Adrenal gland (tissue), 19 donors: ENCODE measurements at regions of chr3 and their contacts with region 1.

Region 1: GRCh38 chr3:7285505-7285904 is 424.6 kb downstream of the GRM7 start:
- DNase-seq: peak in 5 of 7 donors; percentile 37 to 57 (median 53)
- H3K4me3 ChIP-seq: no peak overlapping the region
- H3K27ac ChIP-seq: no peak overlapping the region
- H3K4me1 ChIP-seq: no peaks in the 10 kb centered on the region
- H3K27me3 ChIP-seq: no peaks in the 10 kb centered on the region
- CTCF ChIP-seq: peak in 5 of 6 experiments; percentile 30 to 52 (median 45)
- POLR2A ChIP-seq: no peak

Region 2: GRCh38 chr3:6468589-6468988 is 816.9 kb before region 1 on chr3:
- intact Hi-C with region 1: no loop called
- DNase-seq: no peak
- H3K4me3 ChIP-seq: no peak overlapping the region
- H3K27ac ChIP-seq: no peak overlapping the region
- H3K4me1 ChIP-seq: no peaks in the 10 kb centered on the region
- H3K27me3 ChIP-seq: no peaks in the 10 kb centered on the region
- CTCF ChIP-seq: no peak
- POLR2A ChIP-seq: no peak

Region 3: DNA sequence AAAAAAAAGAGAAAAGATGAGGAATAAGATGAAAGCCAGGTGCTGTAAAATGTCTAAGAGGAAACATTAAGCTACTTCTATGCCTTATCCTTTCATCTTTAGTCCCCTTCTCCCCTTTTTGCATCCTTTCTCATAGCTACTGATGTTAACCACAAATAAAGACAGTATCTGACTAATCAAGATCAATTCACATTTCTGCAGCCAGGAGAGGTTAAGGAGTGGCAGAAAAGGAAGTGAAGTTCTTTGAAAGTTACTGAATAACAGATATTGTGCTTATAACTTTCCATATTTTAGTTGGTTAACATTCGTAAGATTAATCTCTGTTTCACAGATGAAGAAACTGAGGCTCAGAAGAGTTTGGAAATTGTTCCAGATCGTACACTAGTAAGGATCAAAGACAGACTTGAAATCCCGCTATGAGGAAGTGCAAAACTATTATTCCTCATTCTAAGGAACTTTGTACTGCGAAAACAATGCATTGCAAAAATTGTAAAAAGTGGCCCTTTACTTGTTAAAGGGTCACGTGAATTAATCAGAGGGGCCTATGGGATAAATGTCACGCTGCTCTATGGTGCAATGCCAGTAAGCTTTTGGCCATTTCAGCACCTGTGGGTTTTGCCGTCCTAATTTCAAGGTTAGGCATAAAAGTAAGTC is 542.3 kb before region 1 on chr3:
- intact Hi-C with region 1: no loop called
- DNase-seq: no peak
- H3K4me3 ChIP-seq: no peak overlapping the region
- H3K27ac ChIP-seq: no peak overlapping the region
- H3K4me1 ChIP-seq: no peaks in the 10 kb centered on the region
- H3K27me3 ChIP-seq: no peaks in the 10 kb centered on the region
- CTCF ChIP-seq: no peak
- POLR2A ChIP-seq: no peak

Region 4: DNA sequence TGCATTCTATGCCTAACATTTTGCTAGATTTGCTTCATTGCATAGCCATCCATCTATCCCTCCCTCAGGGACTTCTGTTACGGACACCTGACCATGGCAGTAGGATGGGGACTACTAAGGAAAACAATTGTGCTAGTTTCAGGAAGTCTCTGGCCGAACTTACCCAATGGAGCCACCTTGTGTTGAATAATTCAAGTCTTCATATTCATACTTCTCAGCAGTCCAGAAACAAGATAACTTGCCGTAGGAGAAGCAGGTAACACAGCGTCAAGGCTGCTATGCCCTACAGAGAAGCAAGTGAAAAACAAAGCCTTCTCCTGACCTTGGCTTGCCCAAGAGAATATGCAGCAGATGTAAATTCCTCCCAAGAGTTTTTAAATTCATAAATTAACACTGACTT is 260.7 kb after region 1 on chr3:
- intact Hi-C with region 1: loop called (anchors 5 to 10 kb)
- DNase-seq: peak in 5 of 7 donors; percentile 11 to 55 (median 18)
- H3K4me3 ChIP-seq: no peak overlapping the region
- H3K27ac ChIP-seq: no peak overlapping the region
- H3K4me1 ChIP-seq: no peaks in the 10 kb centered on the region
- H3K27me3 ChIP-seq: peaks cover 4% of the 10 kb centered on the region
- CTCF ChIP-seq: peak in 5 of 6 experiments; percentile 36 to 51 (median 39)
- POLR2A ChIP-seq: no peak